Heart left ventricle (tissue), 16 donors: ENCODE measurements at regions of chr7 and their contacts with region 1.

Region 1: GRCh38 chr7:12524794-12525386 is 45.6 kb upstream of the SCIN start:
- DNase-seq: no peak
- ATAC-seq: no peak
- H3K4me3 ChIP-seq: no peak overlapping the region
- H3K27ac ChIP-seq: no peak overlapping the region
- H3K4me1 ChIP-seq: no peaks in the 10 kb centered on the region
- H3K27me3 ChIP-seq: peaks cover 0 to 7% (median 0%) of the 10 kb centered on the region in 9 donors
- CTCF ChIP-seq: peak; percentile 51 to 75 (median 66)
- POLR2A ChIP-seq: no peak

Region 2: DNA sequence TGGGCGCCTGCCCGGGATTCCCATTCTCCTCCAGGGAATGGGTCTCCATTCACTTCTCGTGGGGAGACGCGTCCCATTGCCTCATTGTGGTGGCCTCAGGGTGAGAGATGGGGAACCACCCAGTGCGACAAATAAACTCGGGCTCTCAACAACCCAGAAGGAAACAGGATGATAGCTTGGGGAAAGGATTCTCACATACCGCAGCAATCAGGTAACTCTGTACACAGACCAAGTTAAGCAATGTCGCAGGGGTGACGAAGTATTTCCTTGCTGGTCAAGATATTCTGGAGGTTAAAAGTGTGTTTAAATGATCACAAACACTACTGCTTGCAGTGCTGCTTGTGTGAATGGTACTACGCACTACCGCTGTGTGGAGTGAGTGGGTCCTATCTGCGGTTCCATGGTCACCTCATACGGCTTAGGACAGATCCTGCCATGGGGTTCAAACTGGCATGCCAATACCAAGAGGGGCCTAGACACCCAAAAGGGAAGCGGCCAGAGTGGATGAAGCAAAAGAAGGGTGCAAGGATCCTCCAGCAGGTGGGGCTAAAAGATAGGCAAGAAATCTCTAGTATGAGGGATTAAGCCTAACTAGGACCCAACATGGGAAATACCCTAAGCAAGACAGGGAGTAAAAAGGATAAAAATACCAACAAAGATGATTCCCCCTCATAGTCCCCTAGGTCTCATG is 457.6 kb before region 1 on chr7:
- intact Hi-C with region 1: no loop called
- DNase-seq: peak in 1 of 5 donors; percentile 30
- ATAC-seq: peak in 3 of 4 donors; percentile 47 to 54 (median 48)
- H3K4me3 ChIP-seq: no peak overlapping the region
- H3K27ac ChIP-seq: no peak overlapping the region
- H3K4me1 ChIP-seq: no peaks in the 10 kb centered on the region
- H3K27me3 ChIP-seq: no peaks in the 10 kb centered on the region
- CTCF ChIP-seq: peak; percentile 43 to 67 (median 54)
- POLR2A ChIP-seq: no peak

Region 3: DNA sequence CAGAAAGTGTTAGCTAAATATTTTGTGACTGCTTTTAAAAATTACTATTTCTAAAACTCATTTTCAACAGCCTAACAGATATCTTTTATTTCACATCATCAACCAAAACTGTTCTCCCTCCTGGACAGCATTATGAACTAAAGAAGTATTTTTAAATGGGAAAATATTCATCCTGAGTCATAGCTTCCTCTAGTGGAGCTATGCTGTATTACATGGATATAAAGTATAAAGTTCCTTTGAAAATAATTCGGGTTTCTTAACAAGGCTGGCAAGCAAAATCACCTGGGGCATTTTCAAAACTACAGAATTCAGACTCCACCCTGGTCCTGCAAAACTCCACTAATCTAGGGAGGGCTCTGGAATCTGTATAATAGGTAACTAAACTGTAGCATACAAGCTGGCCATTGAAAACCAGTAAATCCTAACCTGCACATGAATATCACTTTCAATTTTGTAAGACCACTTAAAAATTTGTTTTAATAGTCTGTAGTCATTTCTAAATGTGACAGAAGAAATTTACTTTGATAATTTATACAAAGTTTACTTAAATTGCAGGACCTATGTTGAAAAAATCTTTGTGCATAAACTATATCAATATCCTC is 99.1 kb after region 1 on chr7:
- intact Hi-C with region 1: loop called in 8 of 10 experiments (anchors 5 kb)
- DNase-seq: no peak
- ATAC-seq: no peak
- H3K4me3 ChIP-seq: no peak overlapping the region
- H3K27ac ChIP-seq: no peak overlapping the region
- H3K4me1 ChIP-seq: peaks cover 0 to 4% (median 0%) of the 10 kb centered on the region in 12 donors
- H3K27me3 ChIP-seq: no peaks in the 10 kb centered on the region
- CTCF ChIP-seq: peak; percentile 50 to 74 (median 70)
- POLR2A ChIP-seq: no peak

Region 4: GRCh38 chr7:12630513-12630819 is 105.6 kb after region 1 on chr7:
- intact Hi-C with region 1: loop called in 3 of 10 experiments (anchors 5 to 10 kb)
- DNase-seq: no peak
- ATAC-seq: no peak
- H3K4me3 ChIP-seq: no peak overlapping the region
- H3K27ac ChIP-seq: no peak overlapping the region
- H3K4me1 ChIP-seq: no peaks in the 10 kb centered on the region
- H3K27me3 ChIP-seq: peaks cover 0 to 14% (median 0%) of the 10 kb centered on the region in 9 donors
- CTCF ChIP-seq: no peak
- POLR2A ChIP-seq: no peak

Region 5: GRCh38 chr7:13262929-13263530 is 738.1 kb after region 1 on chr7:
- intact Hi-C with region 1: loop called (anchors 2 to 5 kb)
- DNase-seq: no peak
- ATAC-seq: peak in 1 of 4 donors; percentile 63
- H3K4me3 ChIP-seq: no peak overlapping the region
- H3K27ac ChIP-seq: no peak overlapping the region
- H3K4me1 ChIP-seq: no peaks in the 10 kb centered on the region
- H3K27me3 ChIP-seq: no peaks in the 10 kb centered on the region
- CTCF ChIP-seq: peak; percentile 41 to 81 (median 62)
- POLR2A ChIP-seq: no peak